ENCODE measurements at regions of chr13 and their contacts with region 1.

Region 1: GRCh38 chr13:39501702-39502324 is 101.2 kb downstream of the LHFPL6 start:
- DNase-seq: no peak
- ATAC-seq: no peak
- H3K4me3 ChIP-seq: no peak overlapping the region
- H3K27ac ChIP-seq: no peak overlapping the region
- H3K4me1 ChIP-seq: peaks cover 11% of the 10 kb centered on the region
- H3K27me3 ChIP-seq: no peaks in the 10 kb centered on the region
- CTCF ChIP-seq: no peak
- POLR2A ChIP-seq: no peak
- RAD21 ChIP-seq: no peak

Region 2: DNA sequence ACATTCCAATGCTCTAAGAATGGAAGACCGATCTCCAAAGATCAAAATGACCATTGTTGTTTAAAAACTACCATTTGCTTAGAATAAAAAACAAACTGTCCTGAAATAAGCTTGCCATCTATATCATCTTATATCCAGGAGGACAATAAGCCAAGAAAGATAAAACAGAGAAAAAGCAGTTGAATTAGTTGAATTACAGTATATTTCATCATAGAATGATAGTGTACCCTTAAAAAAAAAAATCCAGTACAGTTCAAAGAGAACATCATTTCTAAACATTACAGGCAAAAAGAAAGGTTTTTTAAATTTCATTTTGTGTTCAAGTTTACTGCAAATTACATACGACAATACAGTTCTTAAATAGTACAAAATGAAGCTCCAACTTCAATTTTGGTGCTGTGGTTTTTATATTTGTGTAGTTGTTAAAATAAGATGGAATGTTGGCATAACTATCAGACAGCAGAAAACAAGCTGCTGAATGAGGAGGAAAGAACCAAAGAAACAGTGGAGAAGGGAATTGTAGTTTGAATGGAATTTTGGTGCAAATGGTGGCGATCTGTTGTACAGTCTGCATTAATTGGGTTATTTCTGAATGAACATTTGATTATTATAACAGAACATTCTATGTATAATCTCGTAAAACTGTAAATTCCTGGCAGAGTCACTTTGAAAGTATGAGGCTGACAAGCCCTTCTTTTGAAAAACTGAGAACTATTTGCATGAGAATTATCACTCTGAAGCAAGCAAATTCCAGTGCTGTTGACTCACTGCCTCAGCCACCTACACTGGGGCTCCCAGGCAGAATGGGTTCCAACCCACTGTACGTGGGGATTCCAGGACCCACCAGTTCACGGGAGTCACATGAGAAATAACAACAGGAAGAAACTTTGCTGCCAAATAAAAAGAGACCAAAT is 63.5 kb after region 1 on chr13:
- CTCF ChIA-PET with region 1: no interaction called
- POLR2A ChIA-PET with region 1: no interaction called
- dilution Hi-C with region 1: no loop called
- in situ Hi-C with region 1: no loop called
- intact Hi-C with region 1: loop called (anchors 2 kb)
- DNase-seq: peak; percentile 95
- ATAC-seq: peak; percentile 90
- H3K4me3 ChIP-seq: peak overlapping the region; percentile 34; the same call in 1 of the 2 replicates
- H3K27ac ChIP-seq: peak overlapping the region; percentile 50; the same call in 1 of the 2 replicates
- H3K4me1 ChIP-seq: peaks cover 12% of the 10 kb centered on the region
- H3K27me3 ChIP-seq: no peaks in the 10 kb centered on the region
- CTCF ChIP-seq: no peak
- POLR2A ChIP-seq: no peak
- RAD21 ChIP-seq: no peak

Measured in IMR-90 (cell line).